PC-9 (cell line): ENCODE measurements at regions of chr7 and their contacts with region 1.

Region 1: GRCh38 chr7:90579171-90579688 is 16.9 kb upstream of the CDK14 start:
- DNase-seq: peak; percentile 44 to 76
- H3K4me3 ChIP-seq: no peak overlapping the region
- H3K27ac ChIP-seq: 0 out of 2 replicates have a peak overlapping the region, but pooled peaks have one; percentile 26
- H3K4me1 ChIP-seq: no peaks in the 10 kb centered on the region
- H3K27me3 ChIP-seq: no peaks in the 10 kb centered on the region
- CTCF ChIP-seq: no peak

Region 2: GRCh38 chr7:89514970-89515369 is 1064.3 kb before region 1 on chr7:
- CTCF ChIA-PET with region 1: no interaction called
- POLR2A ChIA-PET with region 1: no interaction called
- intact Hi-C with region 1: no loop called
- DNase-seq: no peak
- H3K4me3 ChIP-seq: no peak overlapping the region
- H3K27ac ChIP-seq: no peak overlapping the region
- H3K4me1 ChIP-seq: no peaks in the 10 kb centered on the region
- H3K27me3 ChIP-seq: no peaks in the 10 kb centered on the region
- CTCF ChIP-seq: no peak

Region 3: GRCh38 chr7:90595801-90596671 is 16.8 kb after region 1 on chr7 and contains the start of gene CDK14:
- CTCF ChIA-PET with region 1: interaction called, 3 read pairs
- POLR2A ChIA-PET with region 1: no interaction called
- intact Hi-C with region 1: loop called (anchors 2 kb)
- DNase-seq: peak in 1 of 2 experiments; percentile 79
- H3K4me3 ChIP-seq: peak within 1 kb of the TSS; percentile 59
- H3K27ac ChIP-seq: no peak within 1 kb of the TSS
- H3K4me1 ChIP-seq: peaks cover 8% of the 10 kb centered on the region; the same call in 1 of the 2 replicates
- H3K27me3 ChIP-seq: peaks cover 24% of the 10 kb centered on the region
- CTCF ChIP-seq: no peak; the same call in 1 of the 2 replicates
- total RNA-seq, gene CDK14: 39.1 and 41.6 TPM in 2 replicates